ENCODE measurements at regions of chr21 and their contacts with region 1.

Region 1: DNA sequence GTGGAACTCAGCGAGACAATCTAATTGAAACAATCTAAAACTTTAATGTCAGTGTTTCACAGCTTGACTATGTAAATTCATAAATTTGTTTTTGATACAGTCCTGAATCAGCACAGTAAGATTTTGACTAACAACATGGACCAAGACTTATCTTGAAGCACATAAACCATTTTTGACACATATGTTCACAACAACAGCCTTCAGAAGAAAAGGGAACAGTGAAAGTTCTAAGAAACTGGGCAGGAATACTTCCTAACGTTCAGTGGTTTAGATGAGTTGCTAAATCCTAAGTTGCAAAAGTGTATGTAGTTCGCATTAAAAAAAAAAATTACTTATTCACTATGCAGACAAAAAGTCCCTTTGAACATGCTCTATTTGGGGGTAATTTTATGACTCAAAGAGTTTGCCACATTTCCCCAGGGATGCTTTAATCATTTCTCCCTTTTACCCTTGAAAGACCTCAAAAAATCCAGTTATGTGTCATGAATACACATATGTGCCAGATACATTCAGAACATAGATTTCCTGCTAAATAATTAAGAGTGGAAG is 120.2 kb downstream of the MRPL39 start:
- DNase-seq: peak; percentile 49
- H3K4me3 Mint-ChIP-seq: peak overlapping the region; percentile 63
- H3K27ac Mint-ChIP-seq: peak overlapping the region; percentile 91
- H3K4me1 Mint-ChIP-seq: peaks cover 52% of the 10 kb centered on the region
- H3K27me3 Mint-ChIP-seq: no peaks in the 10 kb centered on the region

Region 2: DNA sequence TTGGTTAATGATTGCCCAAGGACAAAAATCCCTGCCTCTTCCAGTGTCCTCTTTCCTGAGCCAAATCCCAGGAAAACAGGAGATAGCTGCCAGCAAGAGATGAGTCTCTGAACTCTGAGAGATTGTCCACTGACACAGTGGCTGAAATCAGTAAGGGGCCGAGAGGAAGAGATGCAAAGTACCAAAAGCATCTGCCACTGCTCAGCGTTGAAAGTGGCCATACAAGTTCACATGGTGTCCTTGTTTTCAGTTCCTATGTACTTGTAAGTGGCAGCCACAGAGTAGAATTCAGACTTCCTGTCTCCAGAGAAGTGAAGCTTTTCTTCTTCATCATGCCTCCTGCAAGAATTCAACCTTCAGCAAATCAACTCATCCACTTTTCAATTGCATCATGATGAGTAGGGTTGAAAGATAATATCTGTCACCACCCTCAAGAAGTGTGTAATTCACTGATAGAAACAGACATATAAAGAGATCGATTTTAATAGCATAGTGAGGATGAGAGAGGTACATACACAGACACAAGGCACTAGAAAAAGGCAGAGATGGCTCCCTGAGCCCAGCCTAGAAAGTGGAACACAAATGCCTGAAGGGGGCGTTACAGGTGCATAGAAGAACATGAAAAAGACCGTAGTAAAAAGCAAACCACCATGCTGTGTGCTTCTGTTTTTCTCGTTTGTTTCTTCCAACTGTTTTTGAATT is 65.6 kb before region 1 on chr21:
- intact Hi-C with region 1: loop called (anchors 1 kb)
- DNase-seq: peak; percentile 89
- H3K4me3 Mint-ChIP-seq: peak overlapping the region; percentile 70
- H3K27ac Mint-ChIP-seq: peak overlapping the region; percentile 93
- H3K4me1 Mint-ChIP-seq: peaks cover 39% of the 10 kb centered on the region
- H3K27me3 Mint-ChIP-seq: no peaks in the 10 kb centered on the region

Region 3: DNA sequence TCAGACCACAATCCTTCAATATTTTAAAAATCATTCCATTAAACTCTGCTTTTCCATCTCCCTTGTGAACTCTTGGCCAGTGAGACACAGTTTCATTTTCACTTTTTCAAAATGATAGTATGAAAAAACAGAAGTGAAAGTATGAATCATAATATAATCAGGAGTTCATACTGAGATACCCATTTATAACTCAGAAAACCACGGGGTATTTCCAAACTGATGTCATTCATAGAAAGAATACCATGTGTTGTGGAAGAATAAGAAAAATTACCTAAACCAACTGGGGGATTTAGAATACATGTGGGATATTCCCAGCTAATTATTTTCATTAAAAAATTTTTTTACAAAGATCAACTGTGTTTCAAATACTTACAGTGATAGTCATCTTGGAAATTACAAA is 29.7 kb before region 1 on chr21:
- intact Hi-C with region 1: loop called (anchors 1 kb)
- DNase-seq: peak; percentile 67
- H3K4me3 Mint-ChIP-seq: peak overlapping the region; percentile 60
- H3K27ac Mint-ChIP-seq: peak overlapping the region; percentile 79
- H3K4me1 Mint-ChIP-seq: peaks cover 50% of the 10 kb centered on the region
- H3K27me3 Mint-ChIP-seq: no peaks in the 10 kb centered on the region

Region 4: DNA sequence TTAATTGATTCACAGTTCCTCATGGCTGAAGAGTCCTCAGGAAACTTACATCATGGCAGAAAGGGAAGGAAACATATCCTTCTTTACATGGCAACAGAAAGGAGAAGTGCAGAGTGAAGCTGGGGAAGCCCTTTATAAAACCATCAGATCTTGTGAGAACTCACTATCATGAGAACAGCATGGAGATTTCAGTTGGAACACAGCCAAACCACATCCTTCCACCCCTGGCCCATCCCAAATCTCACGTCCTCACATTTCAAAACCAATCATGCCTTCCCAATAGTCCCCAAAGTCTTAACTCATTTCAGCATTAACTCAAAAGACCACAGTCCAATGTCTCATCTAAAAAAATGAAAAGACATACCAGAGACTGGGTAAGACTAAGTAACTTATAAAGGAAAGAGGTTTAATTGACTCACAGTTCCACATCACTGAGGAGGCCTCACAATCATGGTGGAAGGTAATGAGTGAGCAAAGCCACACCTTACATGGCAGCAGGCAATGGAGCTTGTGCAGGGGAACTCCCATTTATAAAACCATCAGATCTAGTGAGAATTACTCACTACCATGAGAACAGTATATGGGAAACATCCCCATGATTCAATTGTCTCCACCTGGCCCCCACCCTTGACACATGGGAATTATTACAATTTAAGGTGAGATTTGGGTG is 15.0 kb after region 1 on chr21:
- intact Hi-C with region 1: loop called (anchors 1 kb)
- DNase-seq: peak; percentile 67
- H3K4me3 Mint-ChIP-seq: peak overlapping the region; percentile 52
- H3K27ac Mint-ChIP-seq: peak overlapping the region; percentile 96
- H3K4me1 Mint-ChIP-seq: peaks cover 39% of the 10 kb centered on the region
- H3K27me3 Mint-ChIP-seq: no peaks in the 10 kb centered on the region

Region 5: GRCh38 chr21:25561668-25562641 is 74.8 kb after region 1 on chr21:
- intact Hi-C with region 1: loop called (anchors 1 kb)
- DNase-seq: peak; percentile 92
- H3K4me3 Mint-ChIP-seq: peak overlapping the region; percentile 90
- H3K27ac Mint-ChIP-seq: peak overlapping the region; percentile 99
- H3K4me1 Mint-ChIP-seq: peaks cover 54% of the 10 kb centered on the region
- H3K27me3 Mint-ChIP-seq: peaks cover 2% of the 10 kb centered on the region